ENCODE measurements at regions of chr19 and their contacts with region 1.

Region 1: GRCh38 chr19:49869441-49870176 is 2.2 kb upstream of the PNKP start:
- DNase-seq: peak; percentile 96 to 98
- ATAC-seq: peak; percentile 77 to 91 (median 84)
- H3K4me3 ChIP-seq: peak overlapping the region; percentile 41 to 73 (median 60)
- H3K27ac ChIP-seq: peak overlapping the region; percentile 88 to 98 (median 94)
- H3K4me1 ChIP-seq: peaks cover 20 to 60% (median 49%) of the 10 kb centered on the region in 9 donors
- H3K27me3 ChIP-seq: no peaks in the 10 kb centered on the region
- CTCF ChIP-seq: peak in 3 of 9 donors; percentile 14 to 24 (median 16)

Region 2: GRCh38 chr19:49512970-49513745 is 356.5 kb before region 1 on chr19:
- intact Hi-C with region 1: loop called in 1 of 10 experiments (anchors 10 kb)
- DNase-seq: peak; percentile 66 to 70
- ATAC-seq: peak; percentile 73 to 87 (median 82)
- H3K4me3 ChIP-seq: peak overlapping the region; percentile 60 to 95 (median 82)
- H3K27ac ChIP-seq: peak overlapping the region; percentile 67 to 93 (median 90)
- H3K4me1 ChIP-seq: peaks cover 5 to 54% (median 35%) of the 10 kb centered on the region in 9 donors
- H3K27me3 ChIP-seq: no peaks in the 10 kb centered on the region
- CTCF ChIP-seq: no peak

Measured in heart right ventricle (tissue), 16 donors.